Posterior cingulate gyrus (tissue), 11 donors: ENCODE measurements at regions of chr6 and their contacts with region 1.

Region 1: DNA sequence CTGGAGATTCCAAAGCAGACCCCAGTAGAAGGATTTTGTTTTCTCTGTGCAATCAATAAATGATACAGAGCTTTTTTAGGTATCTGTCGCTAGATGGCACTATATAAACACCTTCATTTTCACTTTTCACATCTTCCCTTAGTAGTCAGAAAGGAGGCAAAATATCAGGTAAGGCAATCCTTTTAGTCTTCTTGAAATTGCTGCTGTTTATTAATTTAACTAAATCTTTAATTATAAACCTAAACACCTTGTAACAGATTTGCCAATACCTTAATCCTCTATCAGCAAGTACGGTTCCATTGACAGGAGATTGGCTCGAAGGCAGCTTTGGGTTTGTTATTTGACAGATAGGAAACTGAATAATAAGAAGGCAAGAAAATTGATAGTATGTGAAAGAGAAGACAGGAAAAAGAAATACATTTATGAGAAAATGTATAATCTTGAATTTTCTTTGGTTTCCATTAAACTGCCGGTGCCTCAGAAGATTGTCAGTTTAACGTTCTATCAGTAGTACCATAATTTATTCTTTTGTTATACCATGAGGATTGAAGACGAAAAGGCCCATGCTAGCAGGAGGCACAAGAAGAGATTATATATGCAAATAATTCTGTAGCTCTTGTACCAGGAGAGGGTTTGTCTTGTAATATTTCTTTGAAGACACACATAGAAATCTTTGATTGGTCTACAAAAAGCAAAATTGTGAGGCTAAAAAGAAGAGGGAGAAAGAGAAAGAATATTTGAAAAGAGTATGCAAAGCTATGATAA is 23.5 kb upstream of the IBTK start:
- DNase-seq: no peak

Region 2: GRCh38 chr6:82298012-82298411 is 26.9 kb after region 1 on chr6:
- intact Hi-C with region 1: no loop called
- DNase-seq: no peak

Region 3: GRCh38 chr6:82589509-82590206 is 318.6 kb after region 1 on chr6:
- intact Hi-C with region 1: loop called (anchors 10 kb)
- DNase-seq: no peak

Region 4: DNA sequence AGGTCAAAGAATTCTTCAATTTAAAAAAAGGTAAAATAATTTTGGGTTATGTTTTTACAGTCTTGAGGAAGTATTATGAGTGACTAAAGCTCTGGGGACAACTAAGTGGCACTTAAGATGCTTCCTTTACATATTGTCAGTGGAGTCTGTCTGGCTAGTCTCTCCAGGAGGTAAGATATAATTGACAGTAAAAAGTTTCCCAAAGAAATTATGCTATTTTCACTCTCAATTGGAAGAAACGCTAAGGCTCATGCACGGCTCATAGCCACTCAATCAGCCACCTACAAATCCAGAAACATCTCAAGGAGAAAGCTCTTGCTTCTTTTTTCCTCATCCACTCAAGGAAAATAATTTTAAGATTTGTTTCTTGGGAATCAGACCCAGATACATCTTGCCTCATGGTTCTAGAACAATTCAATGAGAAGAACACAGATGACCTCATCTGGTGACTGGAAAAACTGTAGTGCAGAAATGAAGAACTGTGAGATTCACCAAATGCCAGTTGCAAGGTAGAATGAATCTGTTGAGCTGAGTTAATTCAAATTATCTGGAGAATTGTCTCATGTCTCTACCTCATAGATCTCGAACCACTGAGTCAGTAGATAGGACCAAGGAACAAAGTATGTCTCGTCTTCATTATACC is 345.4 kb after region 1 on chr6:
- intact Hi-C with region 1: loop called (anchors 5 kb)
- DNase-seq: no peak

Region 5: GRCh38 chr6:83057705-83058321 is 786.8 kb after region 1 on chr6:
- intact Hi-C with region 1: loop called (anchors 1 kb)
- DNase-seq: peak in 9 of 10 donors; percentile 22 to 93 (median 62)